ENCODE measurements at regions of chr18 and their contacts with region 1.

Region 1: DNA sequence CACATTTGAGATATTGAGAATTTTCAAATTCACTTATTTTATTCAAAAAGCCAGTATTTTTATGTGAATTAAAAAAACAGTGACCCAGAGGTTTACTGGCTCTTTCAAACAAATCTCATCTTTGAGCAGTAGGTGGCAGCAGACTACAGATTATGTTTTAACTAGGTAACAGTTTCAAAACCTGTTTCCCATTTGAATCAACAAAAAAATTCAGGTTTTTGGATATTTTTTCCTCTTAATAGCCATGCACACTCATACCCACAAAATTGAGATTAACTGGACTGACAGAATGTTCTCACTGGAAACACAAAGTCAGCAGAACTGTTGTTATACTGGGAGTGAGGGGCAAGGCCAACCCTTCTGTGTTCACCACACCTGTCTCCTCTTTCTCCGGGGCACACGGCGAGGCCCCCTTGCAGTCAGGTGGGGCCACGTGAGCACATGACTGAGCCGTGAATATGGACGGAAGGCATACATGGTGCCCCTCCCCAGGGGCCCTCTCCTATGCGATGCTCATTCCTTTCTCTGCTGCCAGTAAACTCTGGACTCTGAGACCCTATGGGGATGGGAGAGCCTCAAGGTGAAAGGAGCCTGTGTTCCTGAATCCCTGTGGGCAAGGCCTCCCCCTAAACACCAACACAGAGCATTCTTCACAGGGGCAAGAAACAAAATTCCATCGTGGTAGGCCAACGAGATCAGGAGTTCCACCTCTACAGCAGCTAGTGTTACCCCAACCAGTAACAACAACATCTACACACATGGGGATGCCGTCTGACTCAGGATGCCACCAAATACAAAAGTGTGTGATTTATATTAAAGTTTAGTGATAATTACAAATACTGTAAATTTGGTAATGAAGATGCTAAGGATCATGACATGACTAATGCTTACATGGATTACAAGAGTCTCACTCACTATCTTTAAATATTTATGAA is 80.4 kb downstream of the LPIN2 start:
- DNase-seq: peak; percentile 88
- H3K4me3 Mint-ChIP-seq: peak overlapping the region; percentile 6
- H3K27ac Mint-ChIP-seq: peak overlapping the region; percentile 92
- H3K4me1 Mint-ChIP-seq: peaks cover 35% of the 10 kb centered on the region
- H3K27me3 Mint-ChIP-seq: no peaks in the 10 kb centered on the region

Region 2: GRCh38 chr18:2948038-2948437 is 15.5 kb after region 1 on chr18:
- intact Hi-C with region 1: loop called (anchors 2 kb)
- DNase-seq: no peak
- H3K4me3 Mint-ChIP-seq: no peak overlapping the region
- H3K27ac Mint-ChIP-seq: no peak overlapping the region
- H3K4me1 Mint-ChIP-seq: peaks cover 46% of the 10 kb centered on the region
- H3K27me3 Mint-ChIP-seq: no peaks in the 10 kb centered on the region

Region 3: DNA sequence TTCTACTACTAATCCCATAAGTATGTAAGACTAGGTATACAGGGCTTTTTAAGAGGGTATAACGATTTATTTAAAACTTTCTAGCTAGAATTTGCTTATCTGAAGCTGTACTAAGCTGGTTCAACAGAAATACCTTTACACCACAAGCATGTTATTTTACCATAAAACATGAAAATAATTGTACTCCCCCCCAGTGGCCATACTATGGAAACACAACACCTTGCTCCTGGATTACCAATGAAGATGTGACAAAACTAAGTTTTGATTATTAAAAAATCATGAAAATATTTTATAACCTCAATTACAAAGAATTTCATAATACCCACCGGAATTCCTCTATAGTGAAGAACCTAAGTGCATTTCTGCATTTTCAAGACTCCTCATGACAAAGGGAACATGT is 53.1 kb after region 1 on chr18:
- intact Hi-C with region 1: loop called (anchors 1 kb)
- DNase-seq: peak; percentile 77
- H3K4me3 Mint-ChIP-seq: no peak overlapping the region
- H3K27ac Mint-ChIP-seq: peak overlapping the region; percentile 6
- H3K4me1 Mint-ChIP-seq: peaks cover 65% of the 10 kb centered on the region
- H3K27me3 Mint-ChIP-seq: no peaks in the 10 kb centered on the region

Region 4: GRCh38 chr18:2994603-2995432 is 62.3 kb after region 1 on chr18:
- intact Hi-C with region 1: loop called (anchors 2 kb)
- DNase-seq: peak; percentile 92
- H3K4me3 Mint-ChIP-seq: peak overlapping the region; percentile 75
- H3K27ac Mint-ChIP-seq: peak overlapping the region; percentile 93
- H3K4me1 Mint-ChIP-seq: peaks cover 76% of the 10 kb centered on the region
- H3K27me3 Mint-ChIP-seq: no peaks in the 10 kb centered on the region

Region 5: DNA sequence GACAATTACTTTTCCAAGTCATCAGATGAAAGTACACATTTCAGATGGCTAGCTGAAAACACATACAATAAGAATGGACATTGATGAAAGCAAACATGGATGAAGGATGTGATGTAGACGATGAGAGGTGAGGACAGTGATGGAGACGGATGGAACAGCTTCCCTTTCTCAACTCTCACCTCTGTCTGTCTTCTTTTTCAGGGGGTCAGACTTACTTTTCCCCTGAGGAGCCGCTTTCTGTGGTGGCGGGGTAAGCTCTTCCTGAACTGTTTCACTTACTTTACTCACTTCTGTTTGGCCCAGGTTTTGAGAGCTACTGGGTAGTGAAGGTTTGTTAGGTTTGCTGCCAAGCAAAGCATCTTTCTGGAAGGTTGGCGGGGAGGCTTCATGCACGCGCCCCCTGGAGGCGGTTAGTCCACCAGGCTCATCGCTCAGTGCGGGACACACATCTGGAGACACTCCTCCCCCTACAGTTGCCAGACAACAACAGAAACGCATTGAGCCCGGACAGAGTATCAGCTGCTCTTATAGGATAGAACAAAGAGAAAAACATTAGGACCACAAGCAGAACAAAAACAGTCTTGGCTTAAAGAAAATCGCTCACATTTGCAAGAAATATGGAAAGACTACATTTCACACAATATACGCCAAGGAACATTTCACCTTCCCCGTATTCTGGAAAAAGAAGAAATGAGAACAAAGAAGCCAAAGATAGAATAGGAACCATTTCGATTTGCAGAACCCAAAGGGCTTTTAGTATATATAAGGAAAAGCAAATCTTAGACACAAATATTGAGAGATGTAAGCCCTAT is 196.7 kb after region 1 on chr18:
- intact Hi-C with region 1: loop called (anchors 1 kb)
- DNase-seq: peak; percentile 94
- H3K4me3 Mint-ChIP-seq: peak overlapping the region; percentile 10
- H3K27ac Mint-ChIP-seq: no peak overlapping the region
- H3K4me1 Mint-ChIP-seq: peaks cover 9% of the 10 kb centered on the region
- H3K27me3 Mint-ChIP-seq: no peaks in the 10 kb centered on the region

Region 6: GRCh38 chr18:3151399-3152264 is 219.1 kb after region 1 on chr18:
- intact Hi-C with region 1: loop called (anchors 1 kb)
- DNase-seq: peak; percentile 64
- H3K4me3 Mint-ChIP-seq: no peak overlapping the region
- H3K27ac Mint-ChIP-seq: no peak overlapping the region
- H3K4me1 Mint-ChIP-seq: peaks cover 6% of the 10 kb centered on the region
- H3K27me3 Mint-ChIP-seq: peaks cover 6% of the 10 kb centered on the region

Measured in activated CD4-positive, alpha-beta T cell treated with anti-CD3 and anti-CD28 coated beads, Interleukin-2, amount 10 ng/mL, durations not matched to agents 24 days and 14 days (primary cell).